Ovary (tissue), 10 donors: ENCODE measurements at regions of chr16 and their contacts with region 1.

Region 1: DNA sequence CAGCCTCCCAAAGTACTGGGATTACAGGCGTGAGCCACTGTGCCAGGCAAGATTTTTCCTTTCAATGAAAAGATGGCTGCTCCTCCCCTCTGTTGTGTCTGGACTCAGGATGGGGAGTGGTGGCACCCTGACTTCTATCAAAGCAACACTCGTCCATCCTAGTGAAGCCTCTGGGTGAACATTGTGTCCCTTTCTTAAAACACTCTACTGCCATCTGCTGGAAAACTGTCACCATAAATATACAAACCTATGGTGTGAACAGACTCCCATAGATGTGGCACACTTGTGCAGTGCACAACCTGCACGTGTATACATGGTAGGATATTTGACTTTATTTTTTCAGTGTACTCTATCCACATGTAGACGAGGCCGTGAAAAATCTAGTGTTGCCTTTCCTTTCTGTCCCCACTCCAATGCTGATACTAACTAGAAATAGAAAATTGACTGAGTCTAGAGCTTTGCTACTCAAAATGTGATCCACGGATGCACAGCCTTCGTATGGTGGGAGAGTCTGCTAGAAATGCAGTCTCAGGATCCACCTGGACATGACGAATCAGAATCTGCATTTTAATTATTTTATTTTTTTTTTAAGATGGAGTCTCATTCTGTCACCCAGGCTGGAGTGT is 55.9 kb upstream of the PLCG2 start:
- DNase-seq: no peak
- H3K4me3 ChIP-seq: no peak overlapping the region
- H3K27ac ChIP-seq: no peak overlapping the region
- H3K4me1 ChIP-seq: peaks cover 5% of the 10 kb centered on the region
- H3K27me3 ChIP-seq: no peaks in the 10 kb centered on the region
- CTCF ChIP-seq: peak; percentile 74 to 85 (median 83)
- EP300 ChIP-seq: no peak
- POLR2A ChIP-seq: no peak

Region 2: GRCh38 chr16:81204798-81205680 is 518.2 kb before region 1 on chr16:
- intact Hi-C with region 1: loop called in 1 of 4 experiments (anchors 10 kb)
- DNase-seq: peak in 3 of 5 donors; percentile 38 to 66 (median 60)
- H3K4me3 ChIP-seq: no peak overlapping the region
- H3K27ac ChIP-seq: no peak overlapping the region
- H3K4me1 ChIP-seq: no peaks in the 10 kb centered on the region
- H3K27me3 ChIP-seq: no peaks in the 10 kb centered on the region
- CTCF ChIP-seq: peak; percentile 31 to 71 (median 60)
- EP300 ChIP-seq: no peak
- POLR2A ChIP-seq: no peak

Region 3: GRCh38 chr16:81366316-81366932 is 356.8 kb before region 1 on chr16:
- intact Hi-C with region 1: loop called in 1 of 4 experiments (anchors 10 kb)
- DNase-seq: no peak
- H3K4me3 ChIP-seq: no peak overlapping the region
- H3K27ac ChIP-seq: no peak overlapping the region
- H3K4me1 ChIP-seq: no peaks in the 10 kb centered on the region
- H3K27me3 ChIP-seq: no peaks in the 10 kb centered on the region
- CTCF ChIP-seq: peak; percentile 32 to 70 (median 61)
- EP300 ChIP-seq: no peak
- POLR2A ChIP-seq: no peak

Region 4: GRCh38 chr16:81403616-81404373 is 319.4 kb before region 1 on chr16:
- intact Hi-C with region 1: loop called (anchors 1 to 5 kb)
- DNase-seq: peak; percentile 79 to 91 (median 88)
- H3K4me3 ChIP-seq: peak overlapping the region; percentile 15
- H3K27ac ChIP-seq: no peak overlapping the region
- H3K4me1 ChIP-seq: peaks cover 1% of the 10 kb centered on the region
- H3K27me3 ChIP-seq: no peaks in the 10 kb centered on the region
- CTCF ChIP-seq: peak; percentile 91 to 94 (median 93)
- EP300 ChIP-seq: no peak
- POLR2A ChIP-seq: no peak

Region 5: GRCh38 chr16:81623363-81624102 is 99.7 kb before region 1 on chr16:
- intact Hi-C with region 1: loop called in 3 of 4 experiments (anchors 5 to 10 kb)
- DNase-seq: peak in 2 of 5 donors; percentile 39 to 49
- H3K4me3 ChIP-seq: no peak overlapping the region
- H3K27ac ChIP-seq: no peak overlapping the region
- H3K4me1 ChIP-seq: peaks cover 3% of the 10 kb centered on the region
- H3K27me3 ChIP-seq: no peaks in the 10 kb centered on the region
- CTCF ChIP-seq: peak in 2 of 3 donors; percentile 32 to 61
- EP300 ChIP-seq: no peak
- POLR2A ChIP-seq: no peak

Region 6: GRCh38 chr16:81668243-81669097 is 54.7 kb before region 1 on chr16:
- intact Hi-C with region 1: no loop called
- DNase-seq: peak in 3 of 5 donors; percentile 46 to 62 (median 52)
- H3K4me3 ChIP-seq: no peak overlapping the region
- H3K27ac ChIP-seq: peak overlapping the region in 1 of 2 donors; percentile 53
- H3K4me1 ChIP-seq: peaks cover 8% of the 10 kb centered on the region
- H3K27me3 ChIP-seq: no peaks in the 10 kb centered on the region
- CTCF ChIP-seq: no peak
- EP300 ChIP-seq: no peak
- POLR2A ChIP-seq: no peak

Region 7: DNA sequence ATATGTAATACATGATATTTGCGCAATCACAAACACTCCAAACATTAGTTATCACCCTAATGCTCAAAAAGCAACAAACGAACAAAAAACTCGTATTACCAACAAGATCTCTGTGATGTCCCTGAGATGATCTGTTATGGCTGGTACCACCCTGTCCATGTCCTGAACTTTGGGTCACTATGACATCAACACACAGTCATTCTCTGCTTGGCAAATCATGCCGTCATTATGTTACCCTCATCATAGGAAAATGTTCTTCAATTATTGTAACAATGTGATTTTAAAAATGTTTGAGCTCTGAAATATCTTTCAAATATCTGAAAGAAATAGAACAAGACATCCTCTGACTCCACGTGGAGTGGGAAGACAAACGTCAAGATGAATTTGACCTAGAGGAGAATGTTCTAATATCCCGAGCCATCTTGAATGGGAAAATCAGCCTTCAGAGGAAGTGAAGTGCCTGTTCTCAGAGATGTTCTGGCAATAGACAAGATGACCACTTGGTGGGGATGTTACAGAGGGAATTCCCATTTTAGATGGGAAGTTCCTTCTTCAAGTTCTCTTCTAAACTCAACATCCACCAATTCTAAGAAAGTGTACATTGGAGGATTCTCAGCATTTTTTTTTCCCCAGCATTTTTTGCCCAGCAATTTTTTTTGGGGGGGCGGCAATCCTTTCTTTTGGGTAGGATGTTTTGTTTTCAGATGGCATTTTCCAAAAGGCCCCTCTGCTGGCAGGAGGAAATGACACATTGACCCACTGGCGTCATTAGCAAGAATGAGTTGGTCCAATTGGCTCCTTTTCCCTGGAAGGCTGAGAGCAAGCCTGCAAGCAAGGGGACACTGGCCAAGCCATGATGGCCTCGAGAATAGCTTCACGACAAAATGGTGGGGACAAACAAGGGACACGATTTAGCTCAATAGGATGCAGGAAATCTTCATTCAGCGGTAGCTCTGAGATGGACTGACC is 308.2 kb after region 1 on chr16:
- intact Hi-C with region 1: no loop called
- DNase-seq: no peak
- H3K4me3 ChIP-seq: no peak overlapping the region
- H3K27ac ChIP-seq: no peak overlapping the region
- H3K4me1 ChIP-seq: no peaks in the 10 kb centered on the region
- H3K27me3 ChIP-seq: no peaks in the 10 kb centered on the region
- CTCF ChIP-seq: no peak
- EP300 ChIP-seq: no peak
- POLR2A ChIP-seq: no peak